Stomach (tissue), 19 donors: ENCODE measurements at regions of chr10 and their contacts with region 1.

Region 1: DNA sequence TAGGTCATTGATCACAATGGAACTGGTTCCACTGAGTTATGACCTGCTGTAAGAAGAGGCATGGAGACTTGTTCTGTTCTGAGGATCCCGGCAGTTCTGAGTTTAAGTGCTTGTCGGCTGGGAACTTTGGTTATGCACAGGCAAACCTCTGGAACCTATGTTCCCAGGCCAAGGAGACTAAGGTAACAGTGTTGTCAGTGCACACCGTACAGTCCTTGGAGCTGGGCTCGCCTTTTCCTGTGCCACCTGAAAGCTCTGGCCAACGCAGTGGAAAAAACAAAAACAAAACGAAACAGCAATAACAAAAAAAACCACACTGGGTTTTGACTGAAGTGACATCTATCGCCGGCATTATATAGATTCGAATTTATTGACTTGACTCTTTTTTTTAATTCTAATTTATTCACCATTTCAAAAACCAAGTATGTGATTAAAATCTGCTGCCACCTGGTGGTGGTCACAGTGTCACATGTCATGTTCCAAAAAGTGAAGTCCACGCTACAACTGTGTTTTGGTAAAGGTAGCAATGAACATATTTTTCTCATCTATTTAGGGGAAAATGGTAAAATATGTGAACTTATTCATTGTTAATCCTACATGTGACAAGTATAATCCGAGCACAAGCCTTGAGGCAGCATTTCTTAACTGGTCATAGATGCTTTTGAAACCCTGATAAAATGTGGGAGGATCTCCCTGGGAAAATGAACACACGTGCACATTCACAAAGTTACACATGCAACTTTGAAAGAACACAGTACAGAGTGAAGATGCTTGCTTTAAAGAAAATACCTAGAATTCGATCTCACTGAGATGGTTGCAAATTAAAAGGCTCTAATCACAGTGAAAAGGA is 113.8 kb upstream of the PPP2R2D start:
- DNase-seq: peak; percentile 54 to 73
- H3K4me3 ChIP-seq: no peak overlapping the region
- H3K27ac ChIP-seq: no peak overlapping the region
- H3K4me1 ChIP-seq: no peaks in the 10 kb centered on the region
- H3K27me3 ChIP-seq: peaks cover 0 to 19% (median 0%) of the 10 kb centered on the region in 3 donors
- CTCF ChIP-seq: peak in 5 of 7 experiments; percentile 52 to 72 (median 67)
- EP300 ChIP-seq: no peak
- POLR2A ChIP-seq: no peak

Region 2: GRCh38 chr10:131453594-131454355 is 333.2 kb before region 1 on chr10:
- intact Hi-C with region 1: loop called (anchors 10 kb)
- DNase-seq: peak; percentile 66 to 91
- H3K4me3 ChIP-seq: peak overlapping the region; percentile 20 to 35 (median 26)
- H3K27ac ChIP-seq: no peak overlapping the region
- H3K4me1 ChIP-seq: peaks cover 8 to 12% (median 11%) of the 10 kb centered on the region in 4 donors
- H3K27me3 ChIP-seq: peaks cover 7 to 67% (median 11%) of the 10 kb centered on the region in 3 donors
- CTCF ChIP-seq: peak in 6 of 7 experiments; percentile 27 to 91 (median 78)
- EP300 ChIP-seq: no peak
- POLR2A ChIP-seq: no peak

Region 3: DNA sequence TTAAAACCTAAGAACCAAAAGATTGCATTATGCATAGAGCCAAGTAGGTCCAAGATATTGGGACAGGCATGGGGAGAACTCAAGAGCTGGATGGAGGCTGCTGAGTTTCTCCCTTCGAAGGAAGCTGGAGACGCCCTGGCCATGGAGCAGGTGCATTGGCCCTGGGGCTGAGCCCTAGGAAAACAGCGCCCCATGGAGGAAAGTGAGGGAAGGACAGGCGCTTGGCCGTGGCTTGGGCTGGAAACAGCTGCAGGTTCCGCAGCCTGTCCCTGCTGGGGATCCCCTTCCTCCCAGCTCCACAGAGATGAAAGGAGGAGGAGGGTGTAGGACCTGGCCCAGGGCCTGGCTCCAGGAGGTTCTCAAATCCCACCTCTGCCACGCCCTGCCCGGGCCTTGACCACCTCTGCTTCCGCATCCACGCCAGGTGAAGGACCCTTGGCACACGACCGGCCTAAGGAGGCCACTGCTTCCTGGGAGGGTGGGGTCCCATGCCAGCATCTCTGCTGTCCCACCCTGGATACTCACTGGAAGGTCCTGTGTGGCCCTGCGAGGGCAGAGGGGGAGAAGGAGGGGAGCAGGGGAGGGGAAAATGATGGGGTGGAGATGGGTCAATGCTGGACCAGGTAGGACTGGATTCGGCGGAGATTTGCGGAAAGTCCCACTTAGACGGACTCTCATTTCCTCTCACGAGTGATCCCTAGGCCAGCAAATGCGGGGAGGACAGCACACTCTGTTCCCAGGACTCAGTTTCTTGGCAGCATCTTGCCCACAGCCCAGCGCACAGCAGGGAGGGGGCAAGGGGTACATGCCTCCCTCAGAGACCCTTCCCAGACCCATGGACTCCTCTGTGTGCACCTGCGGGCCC is 216.9 kb before region 1 on chr10:
- intact Hi-C with region 1: loop called (anchors 10 kb)
- DNase-seq: peak in 1 of 2 donors; percentile 15
- H3K4me3 ChIP-seq: no peak overlapping the region
- H3K27ac ChIP-seq: no peak overlapping the region
- H3K4me1 ChIP-seq: no peaks in the 10 kb centered on the region
- H3K27me3 ChIP-seq: peaks cover 0 to 23% (median 0%) of the 10 kb centered on the region in 3 donors
- CTCF ChIP-seq: no peak
- EP300 ChIP-seq: no peak
- POLR2A ChIP-seq: no peak

Region 4: DNA sequence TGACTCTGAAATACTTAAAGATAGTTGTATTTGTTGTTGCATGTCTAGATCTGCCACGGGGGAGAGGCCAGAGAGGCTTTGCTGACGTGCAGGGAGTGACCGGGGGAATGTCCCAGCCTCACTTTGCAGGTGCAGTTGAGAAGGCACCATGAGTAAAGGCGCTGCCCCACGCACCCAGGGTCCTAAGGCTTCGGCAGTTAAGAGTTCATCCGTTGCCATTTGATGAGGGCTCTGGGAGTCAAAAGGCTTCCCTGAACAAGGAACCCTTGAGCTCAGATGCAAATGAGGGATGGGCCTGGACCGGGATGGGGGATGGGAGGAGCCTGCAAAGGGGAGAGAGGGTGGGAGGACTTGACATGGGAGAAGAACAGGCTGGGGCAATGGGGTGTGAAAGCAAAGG is 134.2 kb after region 1 on chr10:
- intact Hi-C with region 1: no loop called
- DNase-seq: no peak
- H3K4me3 ChIP-seq: no peak overlapping the region
- H3K27ac ChIP-seq: no peak overlapping the region
- H3K4me1 ChIP-seq: peaks cover 0 to 15% (median 5%) of the 10 kb centered on the region in 4 donors
- H3K27me3 ChIP-seq: no peaks in the 10 kb centered on the region
- CTCF ChIP-seq: no peak
- EP300 ChIP-seq: no peak
- POLR2A ChIP-seq: no peak